ENCODE measurements at regions of chr5 and their contacts with region 1.

Region 1: GRCh38 chr5:40973364-40974004 is 64.2 kb downstream of the C7 start:
- DNase-seq: no peak
- ATAC-seq: no peak
- H3K4me3 ChIP-seq: no peak overlapping the region
- H3K27ac ChIP-seq: no peak overlapping the region
- H3K4me1 ChIP-seq: no peaks in the 10 kb centered on the region
- H3K27me3 ChIP-seq: no peaks in the 10 kb centered on the region
- CTCF ChIP-seq: no peak

Region 2: DNA sequence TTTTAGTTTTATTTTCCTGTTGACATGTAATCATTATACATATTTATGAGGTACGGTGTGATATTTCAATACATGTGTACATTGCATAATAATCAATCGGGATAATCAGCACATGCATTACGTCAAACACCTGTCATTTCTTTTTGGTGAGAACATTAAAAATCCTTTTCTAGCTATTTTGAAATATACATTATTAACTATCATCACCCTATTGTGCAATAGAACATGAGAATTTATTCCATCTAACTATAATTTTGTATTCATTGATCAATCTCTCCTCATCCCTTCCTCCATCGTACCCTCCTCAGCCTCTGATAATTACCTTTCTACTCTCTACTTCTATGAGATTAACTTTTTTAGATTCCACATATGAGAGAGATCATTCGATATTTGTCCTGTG is 1278.8 kb after region 1 on chr5:
- CTCF ChIA-PET with region 1: no interaction called
- POLR2A ChIA-PET with region 1: interaction called, 10 read pairs
- in situ Hi-C with region 1: no loop called
- intact Hi-C with region 1: no loop called
- DNase-seq: no peak
- ATAC-seq: no peak
- H3K4me3 ChIP-seq: no peak overlapping the region
- H3K27ac ChIP-seq: no peak overlapping the region
- H3K4me1 ChIP-seq: no peaks in the 10 kb centered on the region
- H3K27me3 ChIP-seq: no peaks in the 10 kb centered on the region
- CTCF ChIP-seq: no peak